AG04449 (cell line): ENCODE measurements at regions of chr17 and their contacts with region 1.

Region 1: DNA sequence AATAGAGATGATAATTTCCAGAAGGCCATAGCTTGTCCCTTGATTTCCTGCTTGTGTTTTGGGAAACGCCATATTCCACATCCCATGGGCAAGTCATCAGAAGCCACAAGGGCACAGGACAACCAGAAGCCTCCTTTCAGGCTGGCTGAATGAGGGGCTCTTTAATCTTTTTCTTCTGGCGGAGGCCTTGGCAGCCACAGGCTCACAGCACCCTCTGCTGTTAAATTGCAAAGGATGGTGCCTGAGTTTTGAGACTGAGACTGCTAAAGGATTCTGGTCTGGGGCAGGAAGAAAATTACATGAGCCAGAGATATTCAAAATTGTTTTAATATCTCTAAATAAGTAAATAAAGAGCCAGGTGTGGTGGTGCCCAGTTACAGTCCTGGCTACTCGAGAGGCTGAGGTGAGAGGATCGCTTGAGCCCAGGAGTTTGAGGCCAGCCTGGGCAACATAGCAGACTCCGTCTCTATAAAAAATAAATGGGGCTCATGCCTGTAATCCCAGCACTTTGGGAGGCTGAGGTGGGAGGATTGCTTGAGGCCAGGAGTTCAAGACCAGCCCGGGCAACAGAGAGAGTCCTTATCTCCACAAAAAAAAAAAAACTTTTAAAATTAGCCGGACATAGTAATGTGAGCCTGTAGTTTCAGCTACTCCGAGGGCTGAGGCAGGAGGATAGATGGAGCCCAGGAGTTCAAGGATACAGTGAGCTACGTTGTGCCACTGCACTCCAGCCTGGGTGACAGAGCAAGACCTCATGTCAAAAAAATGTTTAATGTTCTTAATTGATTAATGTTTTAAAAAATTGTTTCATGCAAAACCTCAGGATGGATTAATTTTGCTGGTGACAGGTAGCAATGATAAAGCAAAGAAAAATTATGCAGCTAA is 26.3 kb downstream of the AARSD1 start:
- DNase-seq: peak; percentile 5
- H3K4me3 ChIP-seq: no peak overlapping the region
- CTCF ChIP-seq: peak; percentile 71

Region 2: DNA sequence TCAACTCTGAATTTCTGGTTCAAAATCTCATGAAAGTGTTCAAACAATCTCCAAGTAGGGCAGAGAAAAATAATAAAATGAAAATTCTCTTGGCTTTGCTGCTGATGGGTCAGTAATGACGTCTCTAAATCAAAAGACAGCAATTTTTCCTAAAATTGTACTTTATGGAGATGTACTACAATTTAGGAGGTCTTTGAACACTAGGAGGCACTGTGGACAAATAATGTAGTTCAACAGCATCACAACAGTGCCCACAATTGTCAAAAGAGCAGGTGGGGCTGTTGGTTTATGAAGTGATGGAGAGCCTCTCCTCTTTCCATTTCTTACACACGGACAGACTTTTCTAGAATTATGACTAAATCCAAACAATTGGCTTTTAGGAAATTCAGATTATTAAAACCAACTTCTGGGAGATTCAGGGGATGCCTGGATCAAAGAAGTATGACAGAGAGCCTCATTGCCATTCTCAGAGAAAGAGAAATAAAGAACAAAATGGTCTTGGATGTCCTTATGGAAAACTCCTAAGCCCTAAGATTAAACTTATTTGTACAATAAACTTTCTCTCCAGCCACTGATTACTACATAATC is 216.9 kb before region 1 on chr17:
- CTCF ChIA-PET with region 1: interaction called, 18 read pairs
- POLR2A ChIA-PET with region 1: no interaction called
- DNase-seq: no peak
- H3K4me3 ChIP-seq: no peak overlapping the region
- CTCF ChIP-seq: peak; percentile 57

Region 3: DNA sequence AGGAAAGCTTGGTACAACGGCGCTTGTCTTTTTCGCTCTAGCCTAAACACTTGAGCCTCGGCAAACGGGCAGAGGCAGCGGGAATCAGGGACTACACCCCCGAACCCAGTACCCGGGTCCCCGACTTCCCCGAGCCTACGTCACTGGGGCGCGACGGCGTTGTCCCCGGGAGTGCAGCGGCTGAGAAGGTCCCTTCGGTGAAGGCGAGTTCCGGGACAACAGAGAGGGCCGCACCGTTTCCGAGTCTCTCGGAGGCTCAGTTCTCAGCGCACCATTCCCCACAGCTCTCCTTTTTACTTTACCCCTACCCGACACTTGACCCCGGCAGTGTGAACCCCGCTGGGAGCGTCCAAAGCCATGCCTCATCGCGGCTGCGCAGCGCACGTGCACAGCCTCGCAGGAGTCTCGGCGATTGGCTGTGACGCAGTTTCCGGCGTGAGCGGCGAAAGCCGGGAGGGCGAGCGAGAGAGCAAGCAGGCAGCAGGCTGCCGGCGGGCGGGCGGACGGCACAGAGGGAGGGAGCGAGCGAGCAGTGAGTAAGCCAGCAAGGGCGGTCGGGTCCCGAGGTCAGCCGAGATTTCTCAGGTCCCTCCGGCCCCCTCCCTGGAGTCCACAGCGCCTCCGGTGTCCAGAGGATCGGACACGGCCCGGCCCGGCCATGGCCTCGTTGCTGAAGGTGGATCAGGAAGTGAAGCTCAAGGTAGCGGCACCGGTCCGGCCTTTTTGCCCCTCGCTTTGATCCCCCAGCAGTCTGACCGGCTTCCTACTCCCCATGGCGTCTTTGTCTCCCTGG is 104.8 kb before region 1 on chr17 and contains the start of gene PSME3:
- CTCF ChIA-PET with region 1: interaction called, 20 read pairs
- POLR2A ChIA-PET with region 1: no interaction called
- DNase-seq: no peak
- H3K4me3 ChIP-seq: peak within 1 kb of the TSS; percentile 94
- CTCF ChIP-seq: no peak

Region 4: GRCh38 chr17:42843358-42843934 is 94.5 kb before region 1 on chr17:
- CTCF ChIA-PET with region 1: interaction called, 241 read pairs
- POLR2A ChIA-PET with region 1: no interaction called
- DNase-seq: no peak
- H3K4me3 ChIP-seq: no peak overlapping the region
- CTCF ChIP-seq: peak; percentile 94

Region 5: GRCh38 chr17:42920922-42921321 is 17.0 kb before region 1 on chr17:
- CTCF ChIA-PET with region 1: interaction called, 10 read pairs
- POLR2A ChIA-PET with region 1: no interaction called
- DNase-seq: no peak
- H3K4me3 ChIP-seq: no peak overlapping the region
- CTCF ChIP-seq: no peak

Region 6: GRCh38 chr17:42950044-42950783 is 12.3 kb after region 1 on chr17:
- CTCF ChIA-PET with region 1: interaction called, 16 read pairs
- POLR2A ChIA-PET with region 1: no interaction called
- DNase-seq: no peak
- H3K4me3 ChIP-seq: no peak overlapping the region
- CTCF ChIP-seq: no peak

Region 7: DNA sequence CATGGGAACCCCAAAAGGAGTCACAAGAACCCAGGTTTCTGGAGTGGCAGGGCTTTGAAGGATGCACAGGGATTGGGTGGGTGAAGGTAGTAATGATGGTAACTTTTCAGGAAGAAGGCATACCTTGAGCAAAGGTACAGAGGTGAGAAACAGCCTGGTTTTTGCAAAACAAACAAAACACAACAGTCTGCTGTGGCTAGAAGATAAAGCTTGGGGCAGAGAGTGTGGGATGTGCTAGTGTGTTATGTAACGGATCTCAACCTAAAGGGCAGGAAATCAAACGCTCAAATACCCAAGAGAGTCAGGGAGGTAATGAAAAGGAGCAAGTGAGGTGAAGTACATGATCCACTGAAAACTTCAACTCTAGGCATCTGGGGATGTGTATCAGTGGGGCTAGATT is 37.3 kb after region 1 on chr17:
- CTCF ChIA-PET with region 1: no interaction called
- POLR2A ChIA-PET with region 1: no interaction called
- DNase-seq: no peak
- H3K4me3 ChIP-seq: no peak overlapping the region
- CTCF ChIP-seq: no peak